Activated CD4-positive, alpha-beta memory T cell treated with anti-CD3 and anti-CD28 coated beads for 36 hours (primary cell): ENCODE measurements at regions of chr12 and their contacts with region 1.

Region 1: GRCh38 chr12:7638760-7639555 is 26.8 kb downstream of the APOBEC1 start:
- DNase-seq: peak; percentile 79
- H3K4me3 Mint-ChIP-seq: peak overlapping the region; percentile 77
- H3K27ac Mint-ChIP-seq: peak overlapping the region; percentile 83
- H3K4me1 Mint-ChIP-seq: peaks cover 30% of the 10 kb centered on the region
- H3K27me3 Mint-ChIP-seq: peaks cover 1% of the 10 kb centered on the region

Region 2: GRCh38 chr12:7129872-7130680 is 508.9 kb before region 1 on chr12 and contains the start of gene CLSTN3:
- CTCF ChIA-PET with region 1: no interaction called
- POLR2A ChIA-PET with region 1: no interaction called
- intact Hi-C with region 1: loop called (anchors 5 kb)
- DNase-seq: peak; percentile 91
- H3K4me3 Mint-ChIP-seq: peak within 1 kb of the TSS; percentile 87
- H3K27ac Mint-ChIP-seq: peak within 1 kb of the TSS; percentile 65
- H3K4me1 Mint-ChIP-seq: peaks cover 28% of the 10 kb centered on the region
- H3K27me3 Mint-ChIP-seq: no peaks in the 10 kb centered on the region
- total RNA-seq, gene CLSTN3: 40.1 to 44.7 TPM

Region 3: DNA sequence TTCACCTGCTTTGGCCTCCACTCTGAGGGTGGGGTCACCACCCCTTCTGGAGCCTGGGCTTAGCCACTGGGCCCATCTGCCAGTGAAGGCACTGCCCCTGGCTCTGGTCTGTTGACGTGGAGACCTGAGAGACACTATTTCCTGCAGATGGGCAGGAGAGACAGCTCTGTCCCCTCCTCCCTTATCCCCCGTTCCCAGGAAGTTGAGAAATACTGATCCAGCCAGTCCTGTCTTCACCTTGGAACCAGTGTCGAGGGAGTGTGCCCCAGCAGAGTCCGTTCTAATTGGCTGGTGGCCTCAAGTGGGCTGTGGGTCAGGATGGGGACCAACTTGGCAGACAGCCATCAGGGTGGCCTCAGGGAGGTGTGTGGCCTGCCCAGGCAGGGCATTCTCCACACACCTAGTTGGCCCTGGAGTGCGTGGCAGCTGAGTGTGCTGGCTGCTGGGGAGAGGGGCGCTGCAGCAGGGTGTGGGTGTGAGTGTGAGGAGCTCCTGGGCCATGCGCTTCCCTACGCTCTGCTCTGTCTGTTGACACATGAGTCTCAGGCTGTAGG is 483.4 kb before region 1 on chr12:
- CTCF ChIA-PET with region 1: no interaction called
- POLR2A ChIA-PET with region 1: no interaction called
- intact Hi-C with region 1: no loop called
- DNase-seq: no peak
- H3K4me3 Mint-ChIP-seq: no peak overlapping the region
- H3K27ac Mint-ChIP-seq: no peak overlapping the region
- H3K4me1 Mint-ChIP-seq: no peaks in the 10 kb centered on the region
- H3K27me3 Mint-ChIP-seq: no peaks in the 10 kb centered on the region

Region 4: DNA sequence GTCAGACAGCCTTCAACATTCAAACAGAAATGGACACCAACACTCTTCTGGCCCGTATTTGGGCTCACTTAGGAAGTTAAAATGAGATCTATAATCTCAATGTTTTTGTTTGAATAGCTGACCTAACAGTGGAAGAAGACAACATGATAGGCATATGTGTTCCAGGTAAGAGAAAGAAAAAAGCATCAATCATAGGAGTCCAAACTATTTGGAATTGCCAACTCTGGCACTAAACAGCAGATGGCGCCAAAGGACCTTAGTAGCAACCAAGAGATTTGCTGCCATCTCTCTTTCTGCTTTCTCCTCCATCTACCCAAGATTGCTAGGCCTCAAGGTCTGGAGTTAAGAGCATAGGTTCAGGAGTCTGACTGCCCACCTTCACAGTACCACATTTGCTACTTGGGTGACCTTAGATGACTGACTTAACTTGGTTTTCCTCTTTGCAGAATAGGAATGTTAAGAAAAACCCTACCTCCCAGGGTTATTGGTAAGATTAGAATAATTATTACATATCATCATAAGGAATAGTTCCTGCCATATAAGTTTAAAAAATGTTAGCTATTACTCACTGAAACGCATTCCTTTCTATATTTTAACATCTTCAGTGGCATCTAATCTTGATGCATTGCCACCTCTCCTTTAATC is 419.2 kb before region 1 on chr12:
- CTCF ChIA-PET with region 1: interaction called, 57 read pairs
- POLR2A ChIA-PET with region 1: no interaction called
- intact Hi-C with region 1: loop called (anchors 1 kb)
- DNase-seq: peak; percentile 77
- H3K4me3 Mint-ChIP-seq: no peak overlapping the region
- H3K27ac Mint-ChIP-seq: no peak overlapping the region
- H3K4me1 Mint-ChIP-seq: no peaks in the 10 kb centered on the region
- H3K27me3 Mint-ChIP-seq: no peaks in the 10 kb centered on the region

Region 5: DNA sequence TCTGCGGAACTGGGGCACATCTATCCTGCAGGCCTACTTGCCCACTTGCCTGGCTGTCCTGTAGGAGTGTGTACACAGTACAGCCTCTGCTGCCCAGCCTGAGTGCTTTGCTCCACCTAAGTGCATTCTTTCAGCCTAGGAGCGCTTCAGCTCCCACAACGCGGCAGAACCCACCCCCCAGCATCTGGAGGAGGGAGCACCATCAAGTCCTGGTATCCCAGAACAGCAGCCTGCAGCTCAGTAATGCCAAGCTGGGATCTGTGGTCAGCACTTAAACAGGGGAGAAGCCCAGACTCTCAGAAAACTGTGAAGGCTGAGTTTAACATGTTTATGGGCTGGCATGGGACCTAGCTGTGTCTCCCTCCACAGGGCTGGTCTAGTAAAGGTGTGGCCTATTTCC is 55.4 kb before region 1 on chr12:
- CTCF ChIA-PET with region 1: interaction called, 32 read pairs
- POLR2A ChIA-PET with region 1: no interaction called
- intact Hi-C with region 1: loop called (anchors 1 kb)
- DNase-seq: no peak
- H3K4me3 Mint-ChIP-seq: no peak overlapping the region
- H3K27ac Mint-ChIP-seq: no peak overlapping the region
- H3K4me1 Mint-ChIP-seq: peaks cover 3% of the 10 kb centered on the region
- H3K27me3 Mint-ChIP-seq: peaks cover 25% of the 10 kb centered on the region

Region 6: DNA sequence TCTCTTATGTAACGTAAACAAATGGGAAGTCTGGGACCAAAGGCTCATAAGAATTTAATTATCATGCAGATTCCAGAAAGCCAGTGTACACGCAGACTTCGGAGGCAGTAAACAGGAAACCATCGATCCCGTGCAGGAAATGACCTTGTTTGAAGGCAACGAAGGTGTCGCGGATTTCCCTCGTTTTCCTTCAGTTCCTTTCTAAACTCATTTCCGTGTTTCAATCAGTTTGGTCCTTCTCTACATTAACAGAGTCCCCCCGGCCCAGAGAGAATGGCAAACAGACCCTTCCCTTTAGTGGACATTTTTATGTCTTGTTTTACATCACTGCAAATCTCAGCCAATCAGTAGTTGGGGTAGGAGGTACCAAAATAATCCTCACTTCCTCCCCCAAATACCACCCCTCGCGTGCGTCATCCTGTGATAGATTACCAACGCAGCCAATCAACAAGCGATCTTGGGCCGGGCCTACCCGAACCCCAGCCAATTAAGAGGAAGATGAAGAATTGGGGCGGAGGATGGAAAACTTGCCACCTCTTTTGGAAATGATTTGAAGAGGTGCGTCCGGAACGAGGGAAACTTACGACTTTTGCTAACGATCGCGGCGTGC is 387.4 kb after region 1 on chr12:
- CTCF ChIA-PET with region 1: no interaction called
- POLR2A ChIA-PET with region 1: no interaction called
- intact Hi-C with region 1: loop called (anchors 2 kb)
- DNase-seq: peak; percentile 98
- H3K4me3 Mint-ChIP-seq: peak overlapping the region; percentile 88
- H3K27ac Mint-ChIP-seq: peak overlapping the region; percentile 100
- H3K4me1 Mint-ChIP-seq: peaks cover 9% of the 10 kb centered on the region
- H3K27me3 Mint-ChIP-seq: no peaks in the 10 kb centered on the region